HepG2 (cell line): ENCODE measurements at regions of chr6 and their contacts with region 1.

Region 1: DNA sequence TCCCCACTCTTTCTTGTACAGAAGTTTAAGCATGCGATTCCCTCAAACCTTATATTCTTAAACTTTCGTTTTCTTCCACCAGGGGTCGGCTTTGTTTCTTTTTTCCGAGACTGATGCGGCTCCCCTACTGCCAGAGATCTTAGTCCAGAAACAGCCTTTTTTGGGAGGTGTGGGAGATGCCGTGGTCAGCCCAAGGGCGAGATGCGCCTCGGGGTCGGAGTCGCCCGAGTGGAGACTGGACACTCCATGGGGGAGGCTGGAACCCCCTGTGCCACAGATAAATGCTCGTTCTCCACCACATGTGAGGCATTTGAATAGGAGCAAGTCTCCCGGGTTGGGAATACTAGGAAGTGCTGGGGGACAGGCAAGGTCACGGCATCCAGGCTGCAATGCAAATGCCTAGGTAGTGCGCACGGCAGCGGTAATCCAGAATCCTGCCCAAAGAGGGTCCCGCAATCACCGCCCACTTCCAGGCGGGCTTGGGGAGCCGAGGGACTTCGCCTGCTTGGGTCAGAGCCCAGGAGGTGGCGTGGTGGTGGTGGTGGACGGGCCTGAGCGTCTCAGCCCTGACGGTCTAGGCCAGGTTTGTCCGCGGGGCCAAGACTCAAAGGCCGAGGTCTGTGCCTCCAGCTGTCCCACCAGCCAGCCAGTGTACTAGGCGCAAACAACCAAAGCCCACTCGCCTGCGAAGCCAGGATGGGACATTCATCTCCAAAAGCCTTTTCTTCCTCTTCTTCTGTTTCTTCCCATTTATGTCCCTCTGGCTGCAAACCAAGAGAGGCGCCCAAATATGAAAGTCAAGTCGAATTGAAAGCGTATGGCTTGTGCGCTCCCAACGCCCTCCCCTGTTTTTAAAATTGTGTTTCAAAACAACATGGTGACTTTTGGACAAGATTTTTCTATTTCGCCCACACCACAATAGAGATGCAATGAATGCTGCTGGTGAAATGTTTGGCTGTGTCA is 39.3 kb upstream of the OSTM1 start:
- DNase-seq: peak; percentile 41
- ATAC-seq: peak; percentile 86
- H3K4me3 ChIP-seq: peak overlapping the region; percentile 37 to 69 (median 55)
- H3K27ac ChIP-seq: no peak overlapping the region
- H3K4me1 ChIP-seq: peaks cover 18% of the 10 kb centered on the region
- H3K27me3 ChIP-seq: peaks cover 3 to 50% of the 10 kb centered on the region in 2 experiments
- CTCF ChIP-seq: peak; percentile 65
- EP300 ChIP-seq: no peak
- POLR2A ChIP-seq: no peak
- RAD21 ChIP-seq: peak; percentile 35; the same call in 1 of the 2 replicates

Region 2: DNA sequence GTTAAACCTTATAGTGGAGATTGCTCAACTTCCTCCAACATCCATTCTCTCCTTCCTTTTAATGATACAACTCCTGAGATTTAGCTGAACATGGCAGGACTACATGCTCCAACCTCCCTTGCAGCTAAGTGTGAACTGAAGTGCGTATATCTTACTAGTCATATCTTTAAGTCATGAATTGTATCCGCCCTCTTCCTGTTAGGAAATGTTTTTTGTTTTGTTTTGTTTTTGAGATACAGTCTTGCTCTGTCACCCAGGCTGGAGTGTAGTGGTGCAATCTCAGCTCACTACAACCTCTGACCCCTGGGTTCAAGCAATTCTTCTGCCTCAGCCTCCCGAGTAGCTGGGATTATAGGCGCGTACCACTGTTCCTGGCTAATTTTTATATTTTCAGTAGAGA is 30.5 kb before region 1 on chr6:
- CTCF ChIA-PET with region 1: no interaction called
- POLR2A ChIA-PET with region 1: no interaction called
- in situ Hi-C with region 1: no loop called
- intact Hi-C with region 1: no loop called
- DNase-seq: no peak
- ATAC-seq: no peak
- H3K4me3 ChIP-seq: no peak overlapping the region
- H3K27ac ChIP-seq: no peak overlapping the region
- H3K4me1 ChIP-seq: no peaks in the 10 kb centered on the region
- H3K27me3 ChIP-seq: peaks cover 1 to 7% of the 10 kb centered on the region in 2 experiments; a peak in 2 of 5 replicates
- CTCF ChIP-seq: no peak
- EP300 ChIP-seq: no peak
- POLR2A ChIP-seq: no peak
- RAD21 ChIP-seq: no peak

Region 3: GRCh38 chr6:108174371-108175175 is 60.7 kb after region 1 on chr6:
- CTCF ChIA-PET with region 1: no interaction called
- POLR2A ChIA-PET with region 1: no interaction called
- in situ Hi-C with region 1: no loop called
- intact Hi-C with region 1: loop called (anchors 2 kb)
- DNase-seq: no peak
- ATAC-seq: no peak
- H3K4me3 ChIP-seq: no peak overlapping the region
- H3K27ac ChIP-seq: no peak overlapping the region
- H3K4me1 ChIP-seq: peaks cover 19% of the 10 kb centered on the region
- H3K27me3 ChIP-seq: peaks cover 3 to 60% of the 10 kb centered on the region in 2 experiments; a peak in 3 of 5 replicates
- CTCF ChIP-seq: no peak
- EP300 ChIP-seq: no peak
- POLR2A ChIP-seq: no peak
- RAD21 ChIP-seq: no peak

Region 4: DNA sequence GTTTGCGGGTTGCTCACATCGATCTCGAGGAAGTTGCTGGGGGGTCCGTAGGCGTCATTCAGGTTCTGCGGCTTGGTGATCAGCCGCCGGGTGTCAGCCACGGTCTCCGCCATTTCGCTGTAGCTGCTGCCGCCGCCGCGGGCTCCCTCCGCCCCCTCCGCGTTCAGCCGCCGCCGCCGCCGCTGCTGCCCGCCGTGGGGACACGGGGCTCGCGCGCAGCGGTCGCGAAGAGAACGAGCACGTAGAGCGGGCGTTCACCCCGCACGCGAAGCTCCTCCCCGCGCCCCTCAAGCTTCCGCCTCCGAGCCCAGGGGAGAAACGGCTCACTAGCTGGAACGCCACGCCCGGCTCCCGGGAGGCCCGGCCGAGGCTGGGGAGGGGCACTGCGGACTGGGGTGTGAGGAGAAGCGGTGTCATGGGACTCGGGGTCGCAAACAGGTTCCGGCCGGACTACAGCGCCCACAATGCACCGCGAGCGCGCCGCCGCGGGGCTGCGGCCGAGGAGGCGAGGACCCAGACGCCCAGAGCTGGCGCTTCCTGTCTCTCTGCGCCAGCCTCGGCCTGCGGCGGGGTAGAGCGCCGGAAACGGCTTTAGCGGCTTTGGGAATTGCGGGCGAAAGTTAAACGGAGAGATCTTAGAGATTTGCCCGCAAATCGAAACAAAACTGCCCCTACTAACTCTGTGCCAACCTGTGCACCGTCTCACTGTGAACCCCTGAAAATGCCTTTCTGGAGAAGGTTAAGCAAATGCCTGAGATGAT is 147.2 kb after region 1 on chr6 and contains the start of gene SNX3:
- CTCF ChIA-PET with region 1: no interaction called
- POLR2A ChIA-PET with region 1: no interaction called
- in situ Hi-C with region 1: no loop called
- intact Hi-C with region 1: loop called (anchors 2 kb)
- DNase-seq: peak; percentile 93
- ATAC-seq: peak; percentile 96
- H3K4me3 ChIP-seq: peak within 1 kb of the TSS; percentile 91 to 93 (median 92)
- H3K27ac ChIP-seq: peak within 1 kb of the TSS; percentile 94
- H3K4me1 ChIP-seq: peaks cover 35% of the 10 kb centered on the region
- H3K27me3 ChIP-seq: no peaks in the 10 kb centered on the region; a peak in 1 of 5 replicates
- CTCF ChIP-seq: peak; percentile 42
- EP300 ChIP-seq: no peak
- POLR2A ChIP-seq: peak; percentile 61 to 85
- RAD21 ChIP-seq: no peak
- total RNA-seq, gene SNX3: 84.9 and 111 TPM in 2 replicates

Region 5: DNA sequence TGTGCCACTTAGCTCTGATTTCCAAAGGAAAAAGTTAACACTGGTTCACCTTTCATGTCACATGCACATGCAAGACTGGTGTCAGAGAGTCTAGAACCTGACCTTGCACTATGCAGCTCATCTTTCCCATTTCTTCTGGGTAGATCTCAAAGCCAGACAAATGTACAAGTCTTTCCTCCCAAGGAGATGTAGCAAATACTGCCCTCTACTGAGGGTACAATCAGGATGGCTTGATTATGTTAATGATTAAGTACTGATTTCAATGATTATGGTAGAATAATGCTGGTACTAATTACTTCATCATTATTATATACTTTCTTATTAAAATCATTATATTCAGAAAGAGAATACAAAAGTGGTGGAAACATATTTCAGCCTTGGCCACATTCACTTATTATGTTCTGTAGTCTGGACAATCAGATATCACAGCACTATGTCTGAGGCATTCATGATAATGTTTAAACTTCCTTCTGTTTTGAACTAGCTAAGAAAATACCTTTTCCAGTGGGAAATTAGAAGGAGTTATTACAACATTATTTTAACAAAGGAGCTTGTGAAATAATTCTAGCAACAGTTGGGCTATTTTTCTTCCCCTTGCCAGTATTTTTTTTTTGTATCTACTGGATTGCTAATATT is 378.4 kb after region 1 on chr6:
- CTCF ChIA-PET with region 1: interaction called, 15 read pairs
- POLR2A ChIA-PET with region 1: no interaction called
- in situ Hi-C with region 1: loop called (anchors 5 kb)
- intact Hi-C with region 1: loop called (anchors 1 kb)
- DNase-seq: peak; percentile 25
- ATAC-seq: peak; percentile 36; the same call in 2 of the 3 replicates
- H3K4me3 ChIP-seq: no peak overlapping the region
- H3K27ac ChIP-seq: no peak overlapping the region
- H3K4me1 ChIP-seq: no peaks in the 10 kb centered on the region
- H3K27me3 ChIP-seq: no peaks in the 10 kb centered on the region; a peak in 1 of 5 replicates
- CTCF ChIP-seq: peak; percentile 66
- EP300 ChIP-seq: no peak
- POLR2A ChIP-seq: no peak
- RAD21 ChIP-seq: no peak

Region 6: GRCh38 chr6:108526739-108527174 is 412.9 kb after region 1 on chr6:
- CTCF ChIA-PET with region 1: interaction called, 26 read pairs
- POLR2A ChIA-PET with region 1: no interaction called
- in situ Hi-C with region 1: loop called (anchors 5 kb)
- intact Hi-C with region 1: loop called (anchors 1 kb)
- DNase-seq: peak; percentile 55
- ATAC-seq: peak; percentile 79
- H3K4me3 ChIP-seq: no peak overlapping the region
- H3K27ac ChIP-seq: no peak overlapping the region
- H3K4me1 ChIP-seq: peaks cover 6% of the 10 kb centered on the region; the same call in 1 of the 2 replicates
- H3K27me3 ChIP-seq: no peaks in the 10 kb centered on the region
- CTCF ChIP-seq: peak; percentile 82
- EP300 ChIP-seq: no peak
- POLR2A ChIP-seq: no peak
- RAD21 ChIP-seq: 0 out of 2 replicates have a peak, but pooled peaks have one; percentile 25